CD4-positive, alpha-beta memory T cell (primary cell): ENCODE measurements at regions of chr21 and their contacts with region 1.

Region 1: DNA sequence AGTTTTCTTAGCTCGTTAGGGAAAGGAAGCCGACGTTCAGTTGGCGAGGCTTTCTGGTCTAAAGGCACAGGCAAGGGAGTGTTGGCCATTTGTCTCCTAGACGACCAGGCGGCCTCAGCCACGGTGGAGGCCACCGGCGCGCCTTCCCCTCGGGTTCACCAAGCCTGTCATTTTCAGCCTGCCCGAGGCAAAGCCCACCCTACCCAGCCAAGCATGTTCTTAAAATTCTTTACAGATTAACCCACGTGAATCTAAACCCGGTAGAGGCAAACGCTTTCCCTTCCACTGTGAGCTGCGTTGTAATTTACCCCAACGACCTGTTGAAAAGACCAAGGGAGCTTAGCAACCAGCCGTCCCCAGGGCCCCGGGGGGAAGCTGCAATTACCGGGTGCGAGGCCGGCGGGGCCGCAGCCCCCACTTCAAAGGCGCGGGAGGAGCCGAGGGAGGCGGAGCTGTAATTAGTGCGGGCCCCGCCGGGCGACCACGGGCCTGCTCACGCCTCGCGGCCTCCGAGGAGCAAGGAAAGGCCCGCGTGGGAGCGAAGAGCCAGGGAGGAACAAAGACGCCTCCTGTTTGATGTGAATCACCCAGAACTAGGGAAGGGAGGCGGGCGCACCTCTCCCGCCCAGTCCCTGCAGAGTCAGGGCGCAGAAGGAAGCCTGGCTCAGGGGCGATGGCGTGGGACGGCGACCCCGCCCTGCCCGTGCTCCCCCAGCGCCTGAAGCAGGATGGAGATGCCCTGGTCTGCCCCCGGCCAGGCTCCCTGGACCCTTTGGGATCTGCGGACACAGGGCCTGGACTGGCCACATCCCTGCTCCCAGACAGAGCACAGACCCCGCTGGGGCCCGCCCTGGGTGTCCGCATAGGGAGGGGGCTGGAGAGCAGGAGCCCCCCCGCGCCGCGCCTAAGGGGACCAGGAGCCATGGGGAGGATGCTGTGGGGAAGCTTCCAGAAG is 12.1 kb upstream of the TSPEAR start:
- DNase-seq: peak in 3 of 5 donors; percentile 15 to 35 (median 24)
- H3K4me3 ChIP-seq: no peak overlapping the region
- H3K4me3 Mint-ChIP-seq: peak overlapping the region; percentile 48 to 86 (median 76)
- H3K27ac ChIP-seq: no peak overlapping the region
- H3K27ac Mint-ChIP-seq: no peak overlapping the region
- H3K4me1 ChIP-seq: peaks cover 15% of the 10 kb centered on the region
- H3K4me1 Mint-ChIP-seq: peaks cover 5 to 15% (median 9%) of the 10 kb centered on the region in 4 donors
- H3K27me3 ChIP-seq: peaks cover 25% of the 10 kb centered on the region
- H3K27me3 Mint-ChIP-seq: peaks cover 34 to 41% of the 10 kb centered on the region in 2 donors

Region 2: GRCh38 chr21:44709426-44710293 is 13.8 kb before region 1 on chr21:
- CTCF ChIA-PET with region 1: no interaction called
- POLR2A ChIA-PET with region 1: interaction called, 3 read pairs
- intact Hi-C with region 1: loop called (anchors 1 kb)
- DNase-seq: peak in 4 of 5 donors; percentile 15 to 37 (median 24)
- H3K4me3 ChIP-seq: peak overlapping the region in 1 of 2 donors; percentile 24
- H3K4me3 Mint-ChIP-seq: peak overlapping the region; percentile 44 to 80 (median 68)
- H3K27ac ChIP-seq: no peak overlapping the region
- H3K27ac Mint-ChIP-seq: peak overlapping the region in 3 of 7 donors; percentile 19 to 67 (median 35)
- H3K4me1 ChIP-seq: peaks cover 39% of the 10 kb centered on the region
- H3K4me1 Mint-ChIP-seq: peaks cover 18 to 45% (median 31%) of the 10 kb centered on the region in 4 donors
- H3K27me3 ChIP-seq: peaks cover 68% of the 10 kb centered on the region
- H3K27me3 Mint-ChIP-seq: peaks cover 66 to 69% of the 10 kb centered on the region in 2 donors

Region 3: DNA sequence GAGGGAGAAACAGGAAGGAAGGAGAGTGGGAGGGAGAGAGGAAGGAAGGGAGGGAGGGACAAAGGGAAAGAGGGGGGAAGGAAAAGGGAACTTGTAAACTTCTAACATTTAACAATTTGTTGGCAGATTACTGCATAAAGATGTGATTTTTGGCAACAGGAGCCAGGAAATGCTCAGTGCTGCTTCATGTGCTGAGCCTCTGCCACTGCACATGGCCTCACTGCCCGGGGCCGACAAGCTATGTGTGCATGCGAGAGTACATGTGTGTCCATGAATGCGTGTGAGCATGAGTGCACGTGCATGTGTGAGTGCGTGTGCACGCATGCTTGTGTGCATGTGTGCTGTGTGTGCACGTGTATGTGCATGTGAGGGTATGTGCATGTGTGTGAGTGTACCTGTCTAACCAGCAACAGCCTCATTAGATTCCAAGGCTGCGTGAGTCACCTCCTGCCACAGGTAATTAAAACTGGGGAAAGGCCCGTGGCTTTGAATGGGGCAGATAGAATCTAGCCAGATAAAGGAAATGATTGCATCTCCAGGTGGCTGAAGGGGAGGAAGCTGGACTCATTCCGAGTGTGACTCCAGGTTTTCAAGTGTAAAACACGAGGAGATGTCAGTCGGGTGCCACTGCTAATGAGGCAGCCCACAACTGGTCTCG is 29.3 kb after region 1 on chr21:
- CTCF ChIA-PET with region 1: no interaction called
- POLR2A ChIA-PET with region 1: no interaction called
- intact Hi-C with region 1: no loop called
- DNase-seq: no peak
- H3K4me3 ChIP-seq: no peak overlapping the region
- H3K4me3 Mint-ChIP-seq: no peak overlapping the region
- H3K27ac ChIP-seq: no peak overlapping the region
- H3K27ac Mint-ChIP-seq: no peak overlapping the region
- H3K4me1 ChIP-seq: no peaks in the 10 kb centered on the region
- H3K4me1 Mint-ChIP-seq: peaks cover 0 to 1% (median 0%) of the 10 kb centered on the region in 4 donors
- H3K27me3 ChIP-seq: no peaks in the 10 kb centered on the region
- H3K27me3 Mint-ChIP-seq: peaks cover 10 to 11% of the 10 kb centered on the region in 2 donors